Naive thymus-derived CD8-positive, alpha-beta T cell (primary cell): ENCODE measurements at regions of chr1 and their contacts with region 1.

Region 1: DNA sequence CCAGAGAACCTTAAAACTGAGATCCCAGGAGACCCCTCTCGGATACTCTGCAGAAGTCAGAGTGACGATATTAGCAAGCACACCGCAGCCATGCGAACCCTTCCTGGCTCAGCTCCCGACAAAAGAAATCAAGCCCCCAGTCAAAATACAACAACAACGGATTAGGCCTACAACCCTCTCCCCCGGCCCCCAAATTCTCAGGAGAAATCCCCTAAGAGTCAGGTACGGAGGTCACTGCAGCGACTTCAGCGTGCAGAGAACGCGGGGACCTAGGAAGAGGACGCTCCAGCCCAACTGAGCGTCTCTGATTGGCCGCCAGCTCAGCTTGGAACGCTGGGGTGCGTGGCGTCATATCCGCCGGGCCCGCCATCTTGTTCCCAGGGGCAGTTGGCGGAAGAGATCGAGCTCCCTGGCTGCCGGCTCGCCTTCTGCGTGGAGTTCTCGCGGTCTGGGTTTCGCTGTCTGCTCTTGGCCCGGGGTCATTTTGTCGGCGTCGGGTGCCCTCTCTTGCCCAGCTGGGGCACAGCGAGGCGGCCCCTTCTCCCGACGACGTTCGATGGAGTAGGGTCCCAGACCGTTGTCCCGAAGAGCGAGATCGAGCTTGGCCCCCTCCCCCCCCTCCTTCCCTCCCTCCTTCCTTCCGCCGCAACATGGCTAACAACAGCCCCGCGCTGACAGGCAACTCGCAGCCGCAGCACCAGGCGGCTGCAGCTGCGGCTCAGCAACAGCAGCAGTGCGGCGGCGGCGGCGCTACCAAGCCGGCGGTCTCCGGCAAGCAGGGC is at the start of gene PRPF38B:
- DNase-seq: peak; percentile 88 to 96 (median 93)
- ATAC-seq: peak; percentile 81 to 84
- H3K4me3 Mint-ChIP-seq: peak within 1 kb of the TSS; percentile 87 to 100 (median 96)
- H3K27ac Mint-ChIP-seq: peak within 1 kb of the TSS; percentile 95 to 99 (median 98)
- H3K4me1 Mint-ChIP-seq: peaks cover 18 to 50% (median 41%) of the 10 kb centered on the region in 4 donors
- H3K27me3 Mint-ChIP-seq: no peaks in the 10 kb centered on the region
- polyA plus RNA-seq, gene PRPF38B: 18.9 to 21.7 (median 19.1) TPM

Region 2: DNA sequence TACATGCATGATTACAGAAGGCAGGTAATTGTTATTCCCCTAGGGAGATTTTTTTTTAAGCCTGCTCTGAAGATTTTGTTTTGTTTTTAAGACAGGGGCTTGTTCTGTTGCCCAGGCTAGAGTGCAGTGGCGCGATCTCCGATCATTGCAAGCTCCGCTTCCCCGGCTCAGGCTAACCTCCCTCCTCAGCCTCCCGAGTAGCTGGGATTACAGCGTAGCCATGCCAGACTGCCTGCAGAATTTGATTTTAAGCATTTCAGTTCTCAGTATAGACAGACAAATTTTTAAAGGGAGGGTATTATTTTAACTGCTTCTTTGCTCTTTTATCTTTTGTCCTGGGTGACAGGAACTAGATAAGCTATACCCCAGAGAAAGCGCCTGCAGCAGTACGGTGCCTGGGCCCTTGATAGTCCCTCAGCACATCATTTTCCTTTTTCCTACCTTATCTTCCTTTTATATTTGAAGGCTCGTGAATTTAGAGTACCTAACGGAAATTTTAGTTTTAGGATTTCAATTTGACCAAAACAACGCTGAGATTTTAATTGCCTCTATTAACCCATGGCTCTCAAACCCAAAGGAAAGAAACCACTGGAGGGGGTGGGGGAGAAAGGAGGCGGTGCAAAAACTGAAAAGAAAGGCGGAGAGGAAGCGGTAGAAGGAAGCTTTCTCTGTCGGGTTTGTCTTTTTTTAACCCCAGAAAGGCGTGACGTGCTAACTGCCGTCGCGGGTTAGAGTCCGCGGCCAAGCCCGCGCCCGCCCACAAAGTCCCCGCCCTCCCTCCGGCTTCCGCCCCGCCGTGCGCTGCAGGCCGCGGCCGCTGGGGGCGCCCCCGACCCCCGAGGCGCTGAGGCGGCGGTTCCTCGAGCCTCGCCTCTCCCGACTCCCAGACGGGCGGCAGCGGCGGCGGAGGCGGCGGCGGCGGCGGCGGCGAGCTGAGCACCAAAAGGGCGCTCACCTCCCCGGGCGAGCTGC is 132.6 kb before region 1 on chr1 and contains the start of gene EEIG2:
- POLR2A ChIA-PET with region 1: interaction called, 44 read pairs
- DNase-seq: peak; percentile 85 to 93 (median 90)
- ATAC-seq: peak; percentile 83 to 88
- H3K4me3 Mint-ChIP-seq: peak within 1 kb of the TSS; percentile 92 to 98 (median 97)
- H3K27ac Mint-ChIP-seq: peak within 1 kb of the TSS; percentile 87 to 96 (median 93)
- H3K4me1 Mint-ChIP-seq: peaks cover 15 to 42% (median 35%) of the 10 kb centered on the region in 4 donors
- H3K27me3 Mint-ChIP-seq: peaks cover 0 to 2% (median 0%) of the 10 kb centered on the region in 5 donors
- polyA plus RNA-seq, gene EEIG2: 0.48 to 2.4 (median 0.75) TPM

Region 3: DNA sequence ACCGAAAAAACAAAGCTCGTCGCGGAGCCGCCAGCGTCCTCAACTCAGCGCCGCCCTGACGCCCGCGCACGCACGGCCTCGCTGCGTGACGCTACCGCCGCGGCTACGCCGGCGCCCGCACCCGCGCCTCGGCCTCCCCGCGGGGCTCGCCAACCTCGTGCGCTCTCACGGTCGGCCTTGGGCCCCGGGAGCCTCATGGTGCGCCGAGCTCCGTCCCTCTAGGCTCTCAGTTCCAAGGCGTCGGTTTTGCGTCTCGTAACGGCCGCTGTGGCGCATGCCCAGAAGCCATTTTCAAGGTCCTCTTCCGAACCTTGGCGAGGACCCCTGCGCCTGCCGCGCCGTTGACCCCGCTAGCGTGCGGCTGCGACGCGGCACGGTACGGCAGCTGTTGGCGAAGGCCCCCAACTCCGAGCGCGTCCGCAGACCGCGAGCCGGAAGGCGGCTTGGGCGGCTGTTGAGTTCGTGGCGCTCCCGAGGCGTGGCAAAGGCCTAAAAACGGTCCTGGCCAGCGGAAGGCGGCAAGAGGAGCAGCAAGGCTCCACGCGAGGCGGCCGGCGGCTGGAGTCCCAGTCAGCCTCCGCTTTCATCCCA is 31.0 kb before region 1 on chr1 and contains the start of gene HENMT1:
- POLR2A ChIA-PET with region 1: interaction called, 249 read pairs
- DNase-seq: peak; percentile 67 to 92 (median 86)
- ATAC-seq: peak; percentile 85 to 89
- H3K4me3 Mint-ChIP-seq: peak within 1 kb of the TSS; percentile 81 to 90 (median 88)
- H3K27ac Mint-ChIP-seq: peak within 1 kb of the TSS; percentile 94 to 99 (median 98)
- H3K4me1 Mint-ChIP-seq: peaks cover 15 to 52% (median 45%) of the 10 kb centered on the region in 4 donors
- H3K27me3 Mint-ChIP-seq: no peaks in the 10 kb centered on the region
- polyA plus RNA-seq, gene HENMT1: 38.1 to 53.8 (median 42.4) TPM

Region 4: DNA sequence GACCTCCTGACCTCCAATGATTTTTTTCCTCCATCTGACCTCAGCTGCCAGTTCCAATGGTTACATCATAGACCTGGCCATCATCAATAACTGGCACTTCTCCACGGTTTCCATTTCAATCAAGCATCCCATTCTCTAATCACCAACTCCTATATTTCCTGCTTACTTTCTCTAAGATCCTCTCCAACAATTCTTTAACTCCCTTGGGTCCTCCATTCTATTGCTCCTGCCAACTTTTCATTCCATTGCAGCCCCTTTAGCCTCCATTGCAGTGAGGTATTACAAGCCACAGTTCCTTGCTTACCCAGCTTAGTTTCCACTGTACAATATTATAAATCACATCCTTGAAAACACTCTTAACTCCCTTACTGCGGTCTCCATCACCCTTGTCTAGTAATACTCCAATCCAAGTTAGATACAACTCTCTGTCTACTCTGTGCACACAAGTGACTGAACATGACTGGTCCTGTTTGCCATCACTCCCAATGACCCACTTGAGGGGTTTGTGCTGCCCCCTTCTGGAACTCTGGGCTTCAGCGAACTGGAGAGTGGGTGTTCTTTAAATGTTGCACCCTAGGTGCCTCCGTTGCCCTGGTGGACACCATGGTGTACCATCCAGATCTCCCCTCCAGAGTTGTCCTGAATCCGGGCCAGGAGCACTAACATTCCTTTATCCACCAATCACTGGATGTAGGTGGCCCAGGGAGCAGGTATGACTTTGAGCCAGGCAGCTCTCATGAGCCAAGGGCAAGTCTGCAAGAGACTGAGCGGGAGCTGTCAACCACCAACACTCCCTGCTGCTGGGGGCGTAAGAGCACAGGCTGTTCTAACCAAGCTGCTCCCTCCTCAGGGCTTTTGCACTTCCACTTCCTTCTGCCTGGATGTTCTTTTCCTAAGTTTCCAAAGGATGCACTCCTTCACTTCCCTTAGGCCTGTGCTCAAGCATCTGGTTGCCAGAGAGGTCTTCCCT is 16.8 kb after region 1 on chr1:
- POLR2A ChIA-PET with region 1: interaction called, 122 read pairs
- DNase-seq: peak; percentile 30 to 82 (median 60)
- ATAC-seq: peak; percentile 84 to 89
- H3K4me3 Mint-ChIP-seq: peak overlapping the region in 2 of 10 donors; percentile 3 to 12
- H3K27ac Mint-ChIP-seq: peak overlapping the region in 6 of 10 donors; percentile 0 to 56 (median 23)
- H3K4me1 Mint-ChIP-seq: peaks cover 15 to 29% (median 26%) of the 10 kb centered on the region in 4 donors
- H3K27me3 Mint-ChIP-seq: no peaks in the 10 kb centered on the region

Region 5: GRCh38 chr1:108828022-108828961 is 136.2 kb after region 1 on chr1:
- POLR2A ChIA-PET with region 1: interaction called, 11 read pairs
- DNase-seq: peak; percentile 43 to 82 (median 60)
- ATAC-seq: peak; percentile 60 to 82
- H3K4me3 Mint-ChIP-seq: no peak overlapping the region
- H3K27ac Mint-ChIP-seq: no peak overlapping the region
- H3K4me1 Mint-ChIP-seq: peaks cover 0 to 5% (median 2%) of the 10 kb centered on the region in 4 donors
- H3K27me3 Mint-ChIP-seq: peaks cover 0 to 2% (median 0%) of the 10 kb centered on the region in 5 donors

Region 6: DNA sequence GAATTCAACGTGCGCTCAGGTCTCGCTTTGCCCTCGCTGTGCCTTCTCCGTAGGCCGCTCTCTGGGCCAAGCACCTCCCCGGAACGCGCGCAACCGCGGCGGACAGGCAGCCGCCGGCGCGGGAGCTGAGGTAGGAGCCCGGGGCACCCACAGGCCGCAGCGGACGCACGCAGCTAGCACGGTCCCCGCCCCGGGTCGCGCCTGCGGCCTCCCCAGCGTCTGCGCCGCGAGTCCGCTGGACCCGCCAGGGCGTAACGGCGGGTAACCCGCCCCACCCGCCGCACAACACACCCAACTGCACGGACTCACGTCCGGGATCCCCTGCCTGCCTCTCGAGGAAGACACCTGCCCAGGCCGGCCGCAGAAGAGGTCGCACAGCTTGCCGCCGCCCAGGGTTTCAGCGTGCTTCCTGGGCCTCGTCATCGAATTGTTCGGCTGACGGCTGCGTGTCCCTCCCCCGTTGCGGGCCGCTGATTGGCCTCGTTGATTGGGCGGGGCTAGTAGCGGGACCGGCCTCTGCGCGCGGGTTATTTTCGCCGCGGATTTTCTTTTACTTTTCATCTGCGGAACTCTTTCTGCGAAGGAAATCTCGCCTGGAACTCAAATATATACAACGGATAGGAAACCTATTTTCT is 271.0 kb after region 1 on chr1 and contains the start of gene CLCC1:
- POLR2A ChIA-PET with region 1: interaction called, 12 read pairs
- DNase-seq: peak; percentile 82 to 95 (median 90)
- ATAC-seq: peak; percentile 93
- H3K4me3 Mint-ChIP-seq: peak within 1 kb of the TSS; percentile 83 to 95 (median 90)
- H3K27ac Mint-ChIP-seq: peak within 1 kb of the TSS; percentile 84 to 96 (median 95)
- H3K4me1 Mint-ChIP-seq: peaks cover 11 to 37% (median 27%) of the 10 kb centered on the region in 4 donors
- H3K27me3 Mint-ChIP-seq: peaks cover 0 to 14% (median 3%) of the 10 kb centered on the region in 5 donors
- polyA plus RNA-seq, gene CLCC1: 10.6 to 12.7 (median 10.8) TPM

Region 7: GRCh38 chr1:109099938-109100773 is 408.0 kb after region 1 on chr1:
- POLR2A ChIA-PET with region 1: interaction called, 22 read pairs
- DNase-seq: peak; percentile 89 to 99 (median 96)
- ATAC-seq: peak; percentile 87 to 90
- H3K4me3 Mint-ChIP-seq: peak overlapping the region; percentile 91 to 99 (median 96)
- H3K27ac Mint-ChIP-seq: peak overlapping the region; percentile 96 to 99 (median 98)
- H3K4me1 Mint-ChIP-seq: peaks cover 6 to 30% (median 14%) of the 10 kb centered on the region in 4 donors
- H3K27me3 Mint-ChIP-seq: peaks cover 0 to 3% (median 0%) of the 10 kb centered on the region in 5 donors